CD4-positive, alpha-beta memory T cell (primary cell): ENCODE measurements at regions of chr10 and their contacts with region 1.

Region 1: DNA sequence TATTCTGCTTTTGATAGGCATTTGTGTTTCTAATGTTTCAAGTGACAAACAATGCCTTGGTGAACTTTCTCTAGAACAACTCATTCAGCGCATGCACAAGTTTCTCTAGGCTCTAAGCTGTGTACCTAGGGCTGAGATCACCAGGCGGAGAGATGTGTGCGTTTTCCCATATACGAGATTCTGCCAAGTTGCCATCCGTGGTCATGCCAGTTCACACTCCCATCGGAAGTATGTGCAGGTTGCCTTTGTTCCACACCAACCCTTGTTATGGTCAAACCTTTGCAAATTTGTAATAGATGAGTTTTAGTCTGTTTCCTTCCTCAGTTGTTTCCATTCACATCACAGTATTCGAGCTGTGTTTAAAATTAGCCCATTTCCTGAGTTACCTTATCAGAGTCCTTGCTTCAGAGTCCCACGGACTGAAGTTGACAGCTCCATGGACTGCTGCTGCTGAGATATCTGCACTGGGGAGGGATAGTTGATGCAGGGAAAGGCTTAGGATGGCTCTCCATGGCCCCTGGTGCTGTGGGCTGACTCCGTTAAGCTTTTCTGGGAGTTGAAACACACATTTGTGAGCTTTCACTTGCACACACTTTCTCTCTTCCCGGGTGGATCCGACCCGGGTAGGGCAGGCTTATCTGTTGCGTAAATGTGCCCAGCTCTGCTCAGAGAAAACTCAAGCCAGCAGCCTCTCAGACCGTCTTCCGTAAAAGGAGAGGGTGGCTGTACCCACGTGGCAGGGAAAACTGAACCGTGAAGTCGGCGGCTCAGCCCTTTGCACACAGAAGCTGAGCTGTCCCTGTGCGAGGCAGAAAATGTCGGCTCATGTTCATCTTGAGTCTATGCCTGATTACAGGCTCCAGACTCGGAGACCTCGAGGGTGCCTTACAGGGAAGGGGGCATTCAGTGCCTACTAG is 49.4 kb downstream of the HK1 start:
- DNase-seq: peak in 4 of 5 donors; percentile 15 to 57 (median 25)
- H3K4me3 ChIP-seq: peak overlapping the region in 1 of 2 donors; percentile 34
- H3K4me3 Mint-ChIP-seq: peak overlapping the region; percentile 73 to 90 (median 80)
- H3K27ac ChIP-seq: peak overlapping the region; percentile 41
- H3K27ac Mint-ChIP-seq: peak overlapping the region; percentile 88 to 94 (median 91)
- H3K4me1 ChIP-seq: peaks cover 69% of the 10 kb centered on the region
- H3K4me1 Mint-ChIP-seq: peaks cover 37 to 84% (median 61%) of the 10 kb centered on the region in 4 donors
- H3K27me3 ChIP-seq: no peaks in the 10 kb centered on the region
- H3K27me3 Mint-ChIP-seq: no peaks in the 10 kb centered on the region

Region 2: DNA sequence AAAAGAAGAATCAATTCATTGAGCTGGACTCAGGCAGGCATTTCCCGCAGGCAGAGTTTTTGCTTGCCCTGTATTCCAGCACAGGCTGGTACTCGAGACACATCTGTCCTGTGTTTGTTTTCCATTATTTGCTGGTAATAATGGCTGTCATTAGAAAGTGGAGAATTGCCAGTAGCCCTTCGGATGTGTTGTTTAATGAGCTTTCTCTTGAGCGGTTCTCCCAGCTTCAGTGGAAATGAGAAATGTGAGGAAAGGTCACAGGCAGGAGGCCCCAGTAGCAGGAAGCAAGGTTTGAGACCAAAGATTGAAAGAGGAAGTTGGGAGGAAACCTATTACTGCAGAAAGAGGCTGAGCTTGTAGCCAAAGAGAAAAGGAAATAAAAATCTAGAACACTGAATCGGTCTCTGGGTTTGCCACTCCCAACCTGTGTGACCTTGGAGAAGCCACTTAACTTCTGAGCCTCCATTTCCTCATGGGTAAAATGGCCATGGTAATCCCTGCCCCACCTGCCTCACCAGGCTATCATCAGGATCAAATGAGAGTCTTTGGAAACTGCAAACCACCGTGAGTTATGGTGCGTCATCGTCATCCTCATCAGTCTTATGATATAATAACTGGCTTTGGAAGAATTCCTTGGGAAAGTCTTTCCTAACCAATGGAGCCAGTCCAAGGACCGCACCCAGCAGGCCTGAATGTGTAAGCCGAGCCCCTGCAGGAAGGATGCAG is 21.3 kb after region 1 on chr10:
- CTCF ChIA-PET with region 1: interaction called, 6 read pairs
- POLR2A ChIA-PET with region 1: interaction called, 26 read pairs
- intact Hi-C with region 1: loop called (anchors 2 kb)
- DNase-seq: peak in 2 of 5 donors; percentile 14 to 16
- H3K4me3 ChIP-seq: no peak overlapping the region
- H3K4me3 Mint-ChIP-seq: peak overlapping the region; percentile 18 to 86 (median 79)
- H3K27ac ChIP-seq: peak overlapping the region; percentile 34
- H3K27ac Mint-ChIP-seq: peak overlapping the region; percentile 71 to 97 (median 93)
- H3K4me1 ChIP-seq: peaks cover 71% of the 10 kb centered on the region
- H3K4me1 Mint-ChIP-seq: peaks cover 50 to 84% (median 66%) of the 10 kb centered on the region in 4 donors
- H3K27me3 ChIP-seq: no peaks in the 10 kb centered on the region
- H3K27me3 Mint-ChIP-seq: no peaks in the 10 kb centered on the region